CD4-positive, alpha-beta T cell (primary cell): ENCODE measurements at regions of chr9 and their contacts with region 1.

Region 1: DNA sequence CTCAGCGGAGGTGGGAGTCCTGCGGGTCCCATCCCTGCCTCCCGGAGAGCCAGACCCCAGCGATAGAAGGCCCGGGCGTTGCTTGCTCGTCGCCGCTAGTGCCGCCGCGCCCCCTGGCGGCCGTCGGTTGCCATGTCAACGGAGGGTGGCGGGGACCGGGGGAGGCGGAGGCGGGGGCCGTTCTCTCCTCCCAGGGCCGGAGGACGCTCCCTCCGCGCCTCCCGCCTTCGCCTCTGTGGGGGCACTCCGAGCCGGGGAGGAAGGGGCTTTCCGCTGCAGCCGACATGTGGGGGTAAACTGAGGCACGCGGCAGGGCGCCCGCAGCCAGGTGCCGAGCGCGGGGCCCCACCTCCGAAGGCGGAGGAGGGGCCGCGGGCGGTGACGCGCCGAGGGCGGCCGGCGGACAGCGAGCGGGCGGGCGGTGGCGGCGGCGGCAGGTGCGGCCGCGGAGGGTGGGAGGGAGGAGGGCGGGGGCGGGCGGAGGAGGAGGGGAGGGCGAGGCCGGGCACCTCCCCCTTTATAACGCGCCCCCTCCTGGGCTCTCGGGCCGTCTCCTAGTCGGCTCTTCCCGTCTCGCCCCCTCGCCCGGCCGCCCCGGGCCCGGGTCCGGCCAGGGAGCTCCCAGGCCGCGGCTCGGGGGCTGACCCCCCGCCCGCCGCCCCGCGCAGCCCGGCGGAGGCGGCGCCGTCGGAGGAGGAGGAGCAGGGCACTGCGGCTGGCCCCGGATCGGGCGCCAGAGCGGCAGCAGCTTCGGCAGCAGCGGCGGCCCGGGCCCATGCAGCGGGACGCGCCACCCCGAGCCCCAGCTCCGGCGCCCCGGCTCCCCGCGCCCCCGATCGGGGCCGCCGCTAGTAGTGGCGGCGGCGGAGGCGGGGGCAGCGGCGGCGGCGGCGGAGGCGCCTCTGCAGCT is 556 bp upstream of the CDK9 start:
- DNase-seq: peak; percentile 80 to 95 (median 89)
- ATAC-seq: peak; percentile 51
- H3K4me3 ChIP-seq: peak overlapping the region; percentile 50
- H3K4me3 Mint-ChIP-seq: peak overlapping the region; percentile 81
- H3K27ac ChIP-seq: peak overlapping the region; percentile 85 to 89
- H3K27ac Mint-ChIP-seq: peak overlapping the region; percentile 97
- H3K4me1 ChIP-seq: peaks cover 84% of the 10 kb centered on the region
- H3K4me1 Mint-ChIP-seq: peaks cover 72% of the 10 kb centered on the region
- H3K27me3 ChIP-seq: no peaks in the 10 kb centered on the region
- H3K27me3 Mint-ChIP-seq: no peaks in the 10 kb centered on the region
- CTCF ChIP-seq: peak; percentile 76

Region 2: DNA sequence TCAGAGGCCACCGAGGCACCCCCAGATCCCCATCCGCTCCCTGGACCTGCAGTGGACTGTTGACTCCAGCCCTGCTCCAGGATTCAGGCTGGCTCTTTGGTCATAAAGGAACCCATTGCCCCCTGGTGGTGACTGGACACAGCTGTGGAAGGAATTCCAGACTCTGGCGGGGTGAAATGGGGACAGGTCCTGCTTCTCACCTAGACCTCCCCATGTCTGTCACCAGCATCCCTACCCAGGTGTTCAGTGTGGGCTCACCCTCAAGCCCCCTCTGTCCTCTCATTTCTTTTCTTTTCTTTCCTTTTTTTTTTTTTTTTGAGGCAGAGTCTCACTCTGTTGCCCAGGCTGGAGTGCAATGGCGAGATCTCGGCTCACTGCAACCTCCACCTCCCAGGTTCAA is 198.7 kb before region 1 on chr9:
- CTCF ChIA-PET with region 1: no interaction called
- POLR2A ChIA-PET with region 1: no interaction called
- intact Hi-C with region 1: loop called in 1 of 2 experiments (anchors 5 kb)
- DNase-seq: peak; percentile 33 to 82 (median 52)
- ATAC-seq: peak; percentile 43
- H3K4me3 ChIP-seq: no peak overlapping the region
- H3K4me3 Mint-ChIP-seq: no peak overlapping the region
- H3K27ac ChIP-seq: no peak overlapping the region
- H3K27ac Mint-ChIP-seq: no peak overlapping the region
- H3K4me1 ChIP-seq: peaks cover 4% of the 10 kb centered on the region
- H3K4me1 Mint-ChIP-seq: no peaks in the 10 kb centered on the region
- H3K27me3 ChIP-seq: no peaks in the 10 kb centered on the region
- H3K27me3 Mint-ChIP-seq: peaks cover 20% of the 10 kb centered on the region
- CTCF ChIP-seq: peak; percentile 65

Region 3: DNA sequence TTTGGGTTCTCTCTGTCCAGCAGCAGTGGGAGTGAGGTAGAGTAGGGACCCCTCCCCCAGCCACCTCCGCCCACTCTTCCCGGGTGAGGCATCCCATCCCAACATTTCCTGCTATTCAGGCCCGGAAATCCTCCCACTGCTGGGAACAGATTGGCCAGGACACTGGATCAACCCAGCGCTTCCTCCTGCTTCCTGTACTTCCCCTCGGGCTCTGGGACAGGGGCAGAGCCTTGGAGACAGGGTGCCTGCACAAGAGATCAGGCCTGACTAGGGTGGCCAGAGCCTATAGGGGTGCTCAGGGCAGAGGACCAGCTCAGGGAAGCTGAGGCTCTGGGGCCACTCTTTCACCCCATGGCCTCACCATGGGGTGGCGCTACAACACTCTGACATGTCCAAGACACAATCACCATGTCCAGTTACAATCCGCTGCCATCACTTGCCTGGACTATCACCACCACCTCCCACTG is 21.3 kb before region 1 on chr9:
- CTCF ChIA-PET with region 1: interaction called, 19 read pairs
- POLR2A ChIA-PET with region 1: interaction called, 45 read pairs
- intact Hi-C with region 1: no loop called
- DNase-seq: peak in 3 of 14 experiments; percentile 55 to 64 (median 62)
- ATAC-seq: no peak
- H3K4me3 ChIP-seq: no peak overlapping the region
- H3K4me3 Mint-ChIP-seq: no peak overlapping the region
- H3K27ac ChIP-seq: no peak overlapping the region
- H3K27ac Mint-ChIP-seq: peak overlapping the region; percentile 22
- H3K4me1 ChIP-seq: peaks cover 66% of the 10 kb centered on the region
- H3K4me1 Mint-ChIP-seq: peaks cover 63% of the 10 kb centered on the region
- H3K27me3 ChIP-seq: no peaks in the 10 kb centered on the region
- H3K27me3 Mint-ChIP-seq: no peaks in the 10 kb centered on the region
- CTCF ChIP-seq: no peak

Region 4: DNA sequence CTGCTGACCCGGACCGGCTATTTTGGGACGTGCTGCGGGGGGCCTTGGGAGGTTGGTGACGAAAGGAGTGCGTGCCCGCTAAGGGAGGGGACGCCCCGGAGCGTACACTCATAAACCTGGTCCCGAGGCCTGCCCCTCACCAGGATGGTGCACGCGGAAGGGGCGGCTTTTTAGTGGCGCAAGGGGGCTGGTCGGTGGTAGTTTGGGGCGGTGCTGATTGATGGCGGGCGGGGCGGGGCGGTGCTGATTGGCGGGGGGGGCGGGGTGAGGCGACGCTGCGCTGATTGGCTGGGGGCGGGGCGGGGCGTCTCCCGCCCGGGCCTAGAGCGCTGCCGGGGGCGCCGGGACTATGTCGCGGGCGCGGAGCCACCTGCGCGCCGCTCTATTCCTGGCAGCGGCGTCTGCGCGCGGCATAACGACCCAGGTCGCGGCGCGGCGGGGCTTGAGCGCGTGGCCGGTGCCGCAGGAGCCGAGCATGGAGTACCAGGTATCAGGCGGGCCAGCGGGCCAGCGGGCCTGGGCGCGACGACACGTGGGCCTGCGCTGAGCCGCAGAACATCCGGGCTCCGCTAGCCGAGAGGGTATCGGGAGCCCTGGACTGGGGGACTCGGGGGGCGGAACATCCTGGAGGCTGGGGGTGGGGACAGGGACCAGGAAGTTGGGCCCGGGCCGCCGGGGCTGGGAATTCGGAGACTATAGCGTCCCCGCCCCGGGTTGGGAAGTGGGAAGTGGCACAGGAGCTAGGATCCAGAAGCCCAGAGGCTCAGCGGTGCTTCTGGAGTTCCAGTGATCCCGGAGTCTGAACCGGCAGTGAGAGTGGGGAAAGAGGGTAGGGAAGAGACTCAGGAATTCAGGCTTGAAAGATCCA is 17.5 kb after region 1 on chr9 and contains the start of gene FPGS:
- CTCF ChIA-PET with region 1: interaction called, 4 read pairs
- POLR2A ChIA-PET with region 1: interaction called, 9 read pairs
- intact Hi-C with region 1: loop called (anchors 1 to 2 kb)
- DNase-seq: peak; percentile 63 to 94 (median 79)
- ATAC-seq: peak; percentile 90
- H3K4me3 ChIP-seq: peak within 1 kb of the TSS; percentile 79
- H3K4me3 Mint-ChIP-seq: peak within 1 kb of the TSS; percentile 91
- H3K27ac ChIP-seq: peak within 1 kb of the TSS; percentile 79
- H3K27ac Mint-ChIP-seq: peak within 1 kb of the TSS; percentile 80
- H3K4me1 ChIP-seq: peaks cover 29% of the 10 kb centered on the region
- H3K4me1 Mint-ChIP-seq: peaks cover 20% of the 10 kb centered on the region
- H3K27me3 ChIP-seq: no peaks in the 10 kb centered on the region
- H3K27me3 Mint-ChIP-seq: no peaks in the 10 kb centered on the region
- CTCF ChIP-seq: no peak
- total RNA-seq, gene FPGS: 58.0 to 66.6 TPM

Region 5: GRCh38 chr9:127904561-127905003 is 119.3 kb after region 1 on chr9:
- CTCF ChIA-PET with region 1: no interaction called
- POLR2A ChIA-PET with region 1: interaction called, 12 read pairs
- intact Hi-C with region 1: loop called in 1 of 2 experiments (anchors 5 kb)
- DNase-seq: peak in 3 of 14 experiments; percentile 37 to 51 (median 40)
- ATAC-seq: no peak
- H3K4me3 ChIP-seq: peak overlapping the region; percentile 63
- H3K4me3 Mint-ChIP-seq: peak overlapping the region; percentile 89
- H3K27ac ChIP-seq: peak overlapping the region; percentile 95 to 98
- H3K27ac Mint-ChIP-seq: peak overlapping the region; percentile 98
- H3K4me1 ChIP-seq: peaks cover 66% of the 10 kb centered on the region
- H3K4me1 Mint-ChIP-seq: peaks cover 61% of the 10 kb centered on the region
- H3K27me3 ChIP-seq: no peaks in the 10 kb centered on the region
- H3K27me3 Mint-ChIP-seq: no peaks in the 10 kb centered on the region
- CTCF ChIP-seq: no peak